Right ventricle myocardium superior (tissue), 1 donor: ENCODE measurements at regions of chr16 and their contacts with region 1.

Region 1: DNA sequence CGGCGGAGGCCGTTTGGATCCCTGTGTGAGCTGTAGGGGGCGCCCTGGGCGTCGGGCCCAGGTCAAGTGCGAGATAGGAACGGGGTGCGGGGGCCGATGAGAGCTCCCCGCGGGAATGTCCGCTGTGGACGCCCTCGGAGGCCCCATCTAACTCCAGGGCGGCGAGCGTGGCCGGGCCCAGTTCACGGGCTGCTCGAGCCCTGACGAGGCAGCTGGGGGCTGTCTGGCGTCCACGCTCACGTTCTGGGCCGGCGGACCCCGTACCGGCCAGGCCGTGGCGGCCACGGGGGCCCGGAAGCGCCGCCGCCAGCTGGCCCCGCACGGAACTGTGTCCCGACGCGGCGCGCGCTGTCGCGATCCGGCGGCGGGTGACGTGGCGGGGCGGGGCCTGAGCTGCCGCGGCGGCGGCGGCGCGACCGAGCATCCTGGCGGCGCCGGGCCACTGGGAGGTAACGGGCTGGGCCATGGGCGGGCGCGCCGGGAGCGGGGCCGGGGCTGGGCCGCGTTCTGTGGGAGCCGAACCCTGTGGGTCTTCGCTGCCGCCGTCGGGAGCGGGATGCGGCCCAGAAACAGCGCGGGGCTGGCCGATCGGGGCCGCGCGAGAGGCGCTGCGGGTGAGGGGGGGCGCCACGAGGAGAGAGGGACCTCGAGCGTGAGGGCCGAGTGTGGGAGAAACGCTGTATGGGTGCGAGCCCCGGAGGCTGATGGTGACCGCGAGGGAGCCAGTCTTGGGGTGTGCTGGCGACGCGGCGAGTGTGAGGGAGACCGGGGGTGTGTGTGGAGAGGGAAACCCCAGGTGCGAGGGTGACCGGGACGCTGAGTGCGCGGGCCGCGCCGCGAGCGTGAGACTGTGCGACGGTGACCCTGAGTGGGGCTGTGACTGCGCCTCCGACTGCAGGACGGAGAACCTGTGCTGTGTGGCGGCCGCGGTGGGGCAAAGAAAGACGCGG is at the start of gene SLC7A6:
- DNase-seq: peak; percentile 88
- ATAC-seq: peak; percentile 79
- total RNA-seq, gene SLC7A6: 38.7 TPM

Region 2: GRCh38 chr16:67115639-67116038 is 1148.8 kb before region 1 on chr16:
- intact Hi-C with region 1: no loop called
- DNase-seq: no peak
- ATAC-seq: no peak

Region 3: GRCh38 chr16:68310761-68311511 is 46.5 kb after region 1 on chr16 and contains the starts of genes PRMT7 and SLC7A6OS:
- intact Hi-C with region 1: loop called (anchors 5 kb)
- DNase-seq: peak; percentile 95
- ATAC-seq: peak; percentile 100
- total RNA-seq, gene PRMT7: 28.1 TPM
- total RNA-seq, gene SLC7A6OS: 11.2 TPM

Region 4: GRCh38 chr16:68328151-68328859 is 63.9 kb after region 1 on chr16:
- intact Hi-C with region 1: loop called (anchors 2 kb)
- DNase-seq: peak; percentile 82
- ATAC-seq: peak; percentile 94